GM10248 (cell line): ENCODE measurements at regions of chr2 and their contacts with region 1.

Region 1: DNA sequence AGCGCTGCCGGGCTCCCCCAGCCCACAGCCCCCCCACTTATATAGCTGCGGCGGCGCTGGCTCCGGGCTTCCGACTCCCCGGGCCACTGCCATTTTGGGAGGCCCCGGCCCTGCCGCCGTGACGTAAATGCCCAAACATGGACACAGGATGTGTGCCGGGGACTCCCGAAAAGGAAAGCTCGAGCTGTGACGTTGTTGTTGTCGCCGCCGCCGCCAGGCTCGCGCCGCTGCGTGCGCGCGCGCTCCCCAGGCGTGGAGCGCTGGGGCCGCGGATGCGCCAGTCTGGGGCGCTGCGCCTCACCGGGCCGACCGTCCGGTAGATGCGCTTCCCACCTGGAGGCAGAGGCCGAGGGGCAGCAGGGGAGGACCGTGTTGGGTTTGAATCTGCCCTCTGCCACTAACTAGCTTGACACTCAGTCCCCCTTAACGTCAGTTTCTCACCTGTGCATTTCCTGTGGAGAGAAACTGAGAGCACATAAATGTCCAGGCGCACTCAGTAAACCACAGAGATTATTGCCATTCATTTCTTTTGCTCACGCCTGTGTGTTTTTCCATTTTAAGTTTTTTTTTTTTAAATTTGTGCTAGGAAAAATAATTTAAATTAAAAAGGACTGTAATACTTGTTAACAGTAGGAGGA is at the start of gene EGR4:
- DNase-seq: peak; percentile 94
- CTCF ChIP-seq: no peak

Region 2: DNA sequence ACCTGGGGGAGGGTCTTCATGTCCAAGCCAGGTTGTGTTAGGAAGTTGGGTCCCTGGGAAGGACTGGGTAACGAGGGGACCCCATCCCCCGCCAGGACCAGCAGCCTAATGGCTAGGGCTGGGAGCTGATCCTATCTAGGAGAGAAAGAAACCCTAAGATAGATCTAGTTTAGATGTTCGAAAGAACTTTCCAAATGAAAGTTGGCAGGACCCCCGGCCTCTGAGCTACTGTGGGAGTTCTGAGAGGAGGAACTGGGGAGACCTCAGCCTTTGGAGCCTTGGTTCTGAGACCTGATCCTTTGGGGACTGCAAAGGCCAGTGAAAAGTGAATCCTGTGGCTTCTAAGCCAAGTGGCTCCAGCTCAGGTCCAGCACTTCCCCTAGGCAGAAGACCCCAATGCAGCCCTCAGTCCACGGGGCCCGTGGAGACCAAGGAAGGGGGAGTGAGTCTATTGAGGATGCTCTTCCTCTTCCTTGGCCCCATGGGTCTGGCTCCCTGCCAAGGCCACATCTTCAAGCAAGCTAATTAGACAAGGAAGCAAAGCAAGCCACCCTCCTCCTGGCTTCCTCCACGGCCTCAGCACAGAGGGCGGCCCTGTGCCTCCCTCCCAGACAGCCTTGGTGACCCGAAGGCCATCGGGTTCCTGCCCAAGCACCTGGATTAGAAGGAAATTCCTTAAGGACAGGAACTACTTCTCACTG is 36.1 kb before region 1 on chr2:
- CTCF ChIA-PET with region 1: interaction called, 17 read pairs
- POLR2A ChIA-PET with region 1: no interaction called
- DNase-seq: no peak
- CTCF ChIP-seq: no peak

Region 3: DNA sequence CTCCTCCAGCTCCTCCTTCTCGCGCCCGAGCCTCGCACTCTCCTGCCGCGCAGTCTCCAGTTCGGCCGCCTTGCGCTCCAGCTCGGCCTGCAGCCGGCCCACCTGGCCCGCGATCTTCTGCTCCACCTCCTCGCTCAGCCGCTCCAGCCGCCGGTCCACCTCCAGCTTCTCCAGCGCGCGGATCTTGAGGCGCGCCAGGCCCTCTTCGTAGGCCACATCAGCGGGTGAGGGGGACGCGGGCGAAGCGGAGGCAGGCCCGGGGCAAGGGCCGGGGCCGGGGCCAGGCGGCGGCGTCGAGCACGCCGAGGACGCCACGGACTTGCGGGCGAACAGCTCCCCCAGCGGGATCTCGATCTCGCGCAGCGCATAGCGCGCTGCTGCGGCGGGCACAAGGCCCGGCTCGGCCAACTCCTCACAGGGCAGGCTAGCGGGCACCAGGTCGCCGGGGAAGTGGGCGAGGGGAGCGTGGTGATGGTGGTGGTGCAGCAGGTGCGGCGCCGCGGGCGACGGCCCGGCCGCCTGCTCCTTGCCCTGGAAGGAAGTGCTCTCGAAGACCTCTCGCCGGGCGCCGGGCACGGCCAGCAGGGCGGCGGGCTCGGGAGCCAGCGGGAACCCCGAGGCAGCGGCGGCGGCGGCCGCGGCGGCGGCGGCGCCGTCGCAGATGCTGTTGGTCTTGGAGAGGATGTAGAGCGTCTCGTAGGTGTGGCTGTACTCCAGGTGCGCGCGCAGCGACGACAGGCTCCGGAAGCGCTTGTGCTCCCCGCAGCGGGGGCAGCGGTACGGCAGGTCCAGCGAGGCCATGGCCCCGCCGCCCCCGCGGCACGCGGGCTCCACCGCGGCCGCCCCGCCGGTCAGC is 24.6 kb before region 1 on chr2:
- CTCF ChIA-PET with region 1: interaction called, 35 read pairs
- POLR2A ChIA-PET with region 1: no interaction called
- DNase-seq: peak; percentile 91
- CTCF ChIP-seq: no peak

Region 4: DNA sequence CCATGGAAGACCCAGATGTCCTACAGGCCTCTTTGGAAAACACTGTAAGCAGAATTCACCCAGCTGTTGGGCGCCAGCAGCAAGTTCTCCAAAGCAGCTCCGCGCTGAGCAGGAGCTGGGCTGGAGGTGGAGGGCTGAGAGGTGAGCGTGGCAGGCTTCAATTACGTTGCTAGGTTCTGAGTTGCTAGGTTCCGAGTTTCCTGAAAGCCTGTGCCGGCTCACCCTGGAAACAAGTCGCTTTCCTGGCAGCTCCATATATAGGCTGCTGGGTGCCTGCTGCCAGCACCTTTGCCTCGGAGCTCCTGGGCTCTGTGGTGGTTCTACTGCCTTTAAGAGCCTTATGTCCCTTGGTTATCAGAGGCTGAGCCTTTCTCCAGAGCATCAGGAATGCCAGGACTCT is 14.1 kb after region 1 on chr2:
- CTCF ChIA-PET with region 1: interaction called, 13 read pairs
- POLR2A ChIA-PET with region 1: no interaction called
- DNase-seq: no peak
- CTCF ChIP-seq: no peak